Sciatic nerve (tissue), 2 donors: ENCODE measurements at regions of chr15 and their contacts with region 1.

Region 1: GRCh38 chr15:62649793-62650420 is 392.6 kb upstream of the TPM1 start:
- DNase-seq: no peak
- ATAC-seq: no peak

Region 2: GRCh38 chr15:62389885-62390790 is 259.8 kb before region 1 on chr15:
- intact Hi-C with region 1: loop called (anchors 5 kb)
- DNase-seq: peak; percentile 83
- ATAC-seq: peak; percentile 86

Region 3: GRCh38 chr15:62558640-62559380 is 91.1 kb before region 1 on chr15:
- intact Hi-C with region 1: no loop called
- DNase-seq: peak; percentile 73
- ATAC-seq: peak; percentile 93

Region 4: GRCh38 chr15:63234451-63234870 is 584.6 kb after region 1 on chr15:
- intact Hi-C with region 1: no loop called
- DNase-seq: peak; percentile 68
- ATAC-seq: peak; percentile 94